Posterior vena cava (tissue), 2 donors: ENCODE measurements at regions of chr7 and their contacts with region 1.

Region 1: DNA sequence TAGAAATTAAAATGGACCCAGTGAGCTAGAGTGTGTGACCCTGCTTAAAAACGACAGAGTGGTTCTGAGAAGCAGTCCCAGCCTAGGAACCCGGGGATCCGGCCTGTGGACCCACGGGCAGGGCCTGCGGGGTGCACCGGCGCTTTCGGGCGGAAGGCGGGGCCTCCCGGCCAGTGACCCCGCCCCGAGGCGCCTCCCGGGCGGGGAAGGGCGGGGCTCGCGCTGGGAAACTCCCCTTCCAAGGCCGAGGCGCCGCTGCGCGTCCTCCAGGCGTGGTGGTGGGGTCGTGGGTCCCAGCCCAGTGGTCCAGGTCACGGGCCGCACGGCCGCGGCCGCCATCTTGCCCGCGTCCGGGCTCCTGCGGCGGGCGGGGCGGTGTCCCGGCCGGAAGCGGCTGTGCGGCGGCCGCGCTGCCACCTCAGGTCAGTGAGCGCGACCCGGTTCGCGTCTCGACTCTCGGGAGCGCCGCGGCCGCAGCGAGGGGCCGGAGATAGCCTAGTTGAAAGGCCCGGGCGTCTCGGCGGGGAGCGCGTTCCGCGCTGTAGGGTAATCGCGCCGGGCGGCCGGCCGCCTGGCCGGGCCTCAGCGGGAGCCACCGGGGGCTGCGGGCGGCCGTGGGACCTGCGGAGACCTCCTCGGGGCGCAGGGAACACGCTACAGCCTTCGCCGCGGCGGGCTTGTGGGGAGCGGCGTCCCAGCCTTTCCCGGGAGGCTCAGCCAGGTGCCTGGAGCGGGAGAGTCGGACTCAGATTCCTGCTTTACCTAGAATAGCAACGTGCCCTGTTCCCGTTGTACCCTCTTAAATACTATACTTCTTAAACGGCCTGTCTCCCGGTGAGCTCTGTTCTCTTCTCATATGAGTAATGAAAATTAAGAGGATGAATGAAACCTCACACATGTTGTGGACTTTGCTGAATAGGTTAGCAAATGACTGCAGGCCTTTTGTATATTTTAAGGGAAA is at the start of gene MIOS:
- DNase-seq: peak; percentile 96
- total RNA-seq, gene MIOS: 21.0 to 21.2 TPM

Region 2: GRCh38 chr7:7274782-7275181 is 292.1 kb before region 1 on chr7:
- intact Hi-C with region 1: no loop called
- DNase-seq: no peak

Region 3: DNA sequence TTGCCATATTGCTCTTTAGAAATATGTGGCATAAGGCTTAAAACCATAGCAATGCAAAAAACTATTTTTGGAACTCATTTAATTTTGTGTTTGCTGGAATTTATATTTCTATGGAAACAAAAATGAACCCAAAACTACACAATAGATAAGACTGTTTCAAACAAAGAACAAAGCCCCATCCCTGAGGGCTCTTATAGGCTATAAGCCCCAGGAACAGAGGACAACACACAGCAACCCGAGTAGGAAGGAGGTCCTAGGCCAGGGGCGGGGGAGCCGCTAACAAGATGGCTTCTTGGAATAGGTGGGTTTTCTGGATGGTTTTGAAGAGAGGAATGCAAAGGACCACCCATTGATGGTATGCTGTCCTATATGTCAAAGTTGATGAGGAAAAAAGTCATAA is 39.9 kb before region 1 on chr7:
- intact Hi-C with region 1: loop called in 1 of 2 experiments (anchors 2 kb)
- DNase-seq: no peak

Region 4: GRCh38 chr7:7911371-7912155 is 344.6 kb after region 1 on chr7:
- intact Hi-C with region 1: no loop called
- DNase-seq: no peak